BJ (cell line): ENCODE measurements at regions of chr15 and their contacts with region 1.

Region 1: GRCh38 chr15:73964736-73965093 is 27.4 kb downstream of the STOML1 start:
- DNase-seq: no peak
- H3K4me3 ChIP-seq: no peak overlapping the region
- H3K27me3 ChIP-seq: no peaks in the 10 kb centered on the region
- CTCF ChIP-seq: peak; percentile 98

Region 2: DNA sequence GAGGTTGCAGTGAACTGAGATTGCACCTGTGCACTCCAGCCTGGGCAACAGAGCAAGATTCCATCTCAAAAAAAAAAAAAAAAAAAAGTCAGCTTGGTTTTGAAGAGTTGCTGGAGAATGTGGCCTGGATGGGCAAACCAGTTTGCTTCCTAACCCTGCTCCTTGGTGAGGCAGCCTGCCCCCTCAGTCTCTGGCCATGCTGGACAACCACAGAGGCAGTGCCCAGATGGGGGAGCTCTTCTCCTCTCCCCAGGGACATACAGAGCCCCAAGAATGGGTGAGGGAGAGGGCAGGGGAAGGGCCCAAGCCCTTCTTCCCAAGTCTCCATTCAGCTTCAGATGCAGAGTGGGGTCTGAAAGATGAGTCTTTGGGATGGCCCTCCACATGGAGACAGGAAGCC is 252.6 kb before region 1 on chr15:
- CTCF ChIA-PET with region 1: no interaction called
- POLR2A ChIA-PET with region 1: no interaction called
- DNase-seq: no peak
- H3K4me3 ChIP-seq: no peak overlapping the region
- H3K27me3 ChIP-seq: no peaks in the 10 kb centered on the region
- CTCF ChIP-seq: peak; percentile 20; the same call in 1 of the 2 replicates

Region 3: GRCh38 chr15:73786518-73786917 is 178.2 kb before region 1 on chr15:
- CTCF ChIA-PET with region 1: no interaction called
- POLR2A ChIA-PET with region 1: no interaction called
- DNase-seq: no peak
- H3K4me3 ChIP-seq: no peak overlapping the region
- H3K27me3 ChIP-seq: peaks cover 6% of the 10 kb centered on the region; the same call in 1 of the 2 replicates
- CTCF ChIP-seq: no peak

Region 4: GRCh38 chr15:73897441-73898261 is 67.1 kb before region 1 on chr15:
- CTCF ChIA-PET with region 1: interaction called, 10 read pairs
- POLR2A ChIA-PET with region 1: no interaction called
- DNase-seq: peak; percentile 39
- H3K4me3 ChIP-seq: no peak overlapping the region
- H3K27me3 ChIP-seq: no peaks in the 10 kb centered on the region
- CTCF ChIP-seq: peak; percentile 97

Region 5: GRCh38 chr15:73950831-73951561 is 13.7 kb before region 1 on chr15:
- CTCF ChIA-PET with region 1: interaction called, 78 read pairs
- POLR2A ChIA-PET with region 1: no interaction called
- DNase-seq: peak; percentile 93
- H3K4me3 ChIP-seq: no peak overlapping the region
- H3K27me3 ChIP-seq: no peaks in the 10 kb centered on the region
- CTCF ChIP-seq: peak; percentile 91